ENCODE measurements at regions of chr13 and their contacts with region 1.

Region 1: GRCh38 chr13:51814825-51815650 is 11.1 kb upstream of the DHRS12 start:
- DNase-seq: peak; percentile 45 to 60
- ATAC-seq: peak; percentile 67 to 91; a peak in 5 of 6 replicates
- H3K4me3 ChIP-seq: peak overlapping the region; percentile 8; the same call in 1 of the 3 replicates
- H3K27ac ChIP-seq: peak overlapping the region; percentile 34 to 51; a peak in 1 of 6 replicates
- H3K4me1 ChIP-seq: peaks cover 17% of the 10 kb centered on the region; the same call in 1 of the 3 replicates
- CTCF ChIP-seq: peak; percentile 70
- EP300 ChIP-seq: no peak
- POLR2A ChIP-seq: no peak
- RAD21 ChIP-seq: peak; percentile 68

Region 2: DNA sequence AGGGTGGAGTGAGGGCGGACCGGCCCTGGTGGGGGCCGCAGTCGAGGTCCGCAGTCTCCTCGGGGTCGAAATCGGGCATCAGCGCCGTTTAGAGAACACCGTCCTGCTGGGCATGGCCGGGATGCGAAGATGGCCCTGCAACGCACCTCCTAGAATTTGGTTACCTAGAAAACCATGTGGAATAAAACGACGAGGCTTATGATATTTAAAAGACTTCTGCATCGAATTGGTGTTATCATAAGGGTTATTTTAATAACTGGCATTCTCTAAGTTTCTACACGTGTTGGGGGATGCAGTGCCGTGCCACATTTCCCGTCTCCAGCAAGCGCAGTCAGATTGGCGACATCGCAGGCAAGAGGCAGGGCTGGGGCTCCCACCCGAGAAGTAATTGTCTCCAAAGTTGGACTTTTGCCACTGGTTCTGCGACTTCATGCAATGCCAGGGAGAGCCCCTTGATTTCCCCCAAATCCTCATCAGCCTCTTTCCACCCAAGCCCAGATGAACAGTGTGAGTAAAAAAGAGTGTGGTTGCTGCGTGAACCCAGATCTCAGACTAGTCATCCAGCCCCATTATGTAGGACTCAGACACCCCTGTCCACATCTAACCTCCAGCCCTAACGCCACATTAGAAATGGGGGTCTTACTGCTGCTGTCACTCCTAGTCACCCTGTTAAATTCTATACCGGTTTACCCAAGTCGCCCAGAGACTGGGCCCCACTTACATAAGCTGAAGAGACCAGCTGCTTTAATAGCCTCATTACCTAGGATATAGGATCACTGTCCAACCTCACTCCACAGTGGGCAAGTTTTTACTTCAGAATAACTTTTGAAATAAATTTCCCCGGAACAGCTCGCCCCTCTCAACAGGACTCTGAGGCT is 10.5 kb before region 1 on chr13:
- CTCF ChIA-PET with region 1: interaction called, 14 read pairs
- POLR2A ChIA-PET with region 1: no interaction called
- DNase-seq: no peak
- ATAC-seq: peak in 1 of 2 experiments; percentile 27; a peak in 3 of 6 replicates
- H3K4me3 ChIP-seq: peak overlapping the region; percentile 91
- H3K27ac ChIP-seq: peak overlapping the region; percentile 99 to 100
- H3K4me1 ChIP-seq: peaks cover 25% of the 10 kb centered on the region
- CTCF ChIP-seq: no peak
- EP300 ChIP-seq: no peak
- POLR2A ChIP-seq: no peak
- RAD21 ChIP-seq: no peak

Region 3: GRCh38 chr13:51832471-51833152 is 17.6 kb after region 1 on chr13:
- CTCF ChIA-PET with region 1: interaction called, 18 read pairs
- POLR2A ChIA-PET with region 1: no interaction called
- DNase-seq: peak; percentile 20 to 21
- ATAC-seq: peak; percentile 58 to 88; a peak in 3 of 6 replicates
- H3K4me3 ChIP-seq: no peak overlapping the region
- H3K27ac ChIP-seq: no peak overlapping the region
- H3K4me1 ChIP-seq: no peaks in the 10 kb centered on the region
- CTCF ChIP-seq: peak; percentile 15; the same call in 1 of the 3 replicates
- EP300 ChIP-seq: no peak
- POLR2A ChIP-seq: no peak
- RAD21 ChIP-seq: peak; percentile 29 to 53; a peak in 4 of 5 replicates

Region 4: DNA sequence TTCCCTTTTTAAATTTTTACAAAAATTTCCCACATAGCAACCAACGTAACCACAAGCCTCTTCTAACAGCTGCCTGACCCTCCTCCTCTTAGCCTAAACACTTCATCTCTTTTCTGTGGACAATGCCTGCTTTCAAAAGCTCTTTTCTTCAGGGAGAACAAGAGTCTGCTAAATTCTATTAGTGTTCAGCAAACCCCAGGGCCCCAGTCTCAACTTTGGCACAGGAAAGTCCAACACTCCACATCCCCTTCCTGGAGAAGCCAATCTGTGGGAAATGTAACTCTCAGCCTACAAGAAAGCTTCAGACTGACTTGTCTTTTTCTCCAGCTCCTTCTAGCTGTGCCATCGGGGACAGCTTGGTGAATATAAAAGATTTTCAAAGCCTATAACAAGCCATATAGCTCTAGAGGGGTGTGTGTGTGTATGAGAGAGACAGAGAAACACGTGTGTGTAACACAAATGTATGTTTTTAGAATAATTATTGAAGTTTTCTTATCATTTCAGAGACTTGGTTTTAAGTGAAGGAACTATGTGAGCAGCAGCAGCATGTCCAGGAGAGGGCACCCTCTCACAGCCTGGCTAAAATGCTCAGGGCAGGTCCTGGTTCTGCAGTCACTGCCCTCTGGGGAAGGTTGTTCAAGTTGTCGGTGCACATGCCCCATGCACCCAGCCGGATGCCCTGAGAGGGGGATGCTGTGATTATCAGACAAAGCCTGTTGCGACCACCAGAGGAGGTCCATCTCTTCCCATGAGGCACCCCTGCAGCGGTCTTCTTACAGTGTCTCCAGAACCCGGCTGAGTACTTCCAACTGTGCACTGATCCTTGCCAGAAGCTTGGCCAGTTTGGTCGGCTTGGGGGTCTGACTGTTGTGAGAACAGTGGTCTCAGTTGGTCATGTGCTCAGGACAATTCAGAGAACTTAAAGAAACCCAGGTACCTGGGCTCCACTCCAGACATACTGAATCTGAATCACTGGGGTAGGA is 81.2 kb after region 1 on chr13:
- CTCF ChIA-PET with region 1: interaction called, 10 read pairs
- POLR2A ChIA-PET with region 1: no interaction called
- DNase-seq: peak; percentile 41 to 47
- ATAC-seq: peak; percentile 95 to 98
- H3K4me3 ChIP-seq: no peak overlapping the region
- H3K27ac ChIP-seq: no peak overlapping the region
- H3K4me1 ChIP-seq: no peaks in the 10 kb centered on the region
- CTCF ChIP-seq: peak; percentile 60
- EP300 ChIP-seq: no peak
- POLR2A ChIP-seq: no peak
- RAD21 ChIP-seq: peak; percentile 63 to 70

Measured in A549 (cell line).